Activated naive CD4-positive, alpha-beta T cell treated with anti-CD3 and anti-CD28 coated beads for 36 hours (primary cell): ENCODE measurements at regions of chr10 and their contacts with region 1.

Region 1: GRCh38 chr10:14837757-14838581 is at the starts of genes CDNF, HSPA14 and MSANTD7:
- DNase-seq: peak; percentile 99
- H3K4me3 Mint-ChIP-seq: peak within 1 kb of the TSS; percentile 92
- H3K27ac Mint-ChIP-seq: peak within 1 kb of the TSS; percentile 93
- H3K4me1 Mint-ChIP-seq: peaks cover 22% of the 10 kb centered on the region
- H3K27me3 Mint-ChIP-seq: no peaks in the 10 kb centered on the region
- total RNA-seq, gene CDNF: 1.6 to 1.8 TPM
- total RNA-seq, gene HSPA14: 28.1 to 29.9 TPM
- total RNA-seq, gene MSANTD7: 19.6 to 21.3 TPM

Region 2: DNA sequence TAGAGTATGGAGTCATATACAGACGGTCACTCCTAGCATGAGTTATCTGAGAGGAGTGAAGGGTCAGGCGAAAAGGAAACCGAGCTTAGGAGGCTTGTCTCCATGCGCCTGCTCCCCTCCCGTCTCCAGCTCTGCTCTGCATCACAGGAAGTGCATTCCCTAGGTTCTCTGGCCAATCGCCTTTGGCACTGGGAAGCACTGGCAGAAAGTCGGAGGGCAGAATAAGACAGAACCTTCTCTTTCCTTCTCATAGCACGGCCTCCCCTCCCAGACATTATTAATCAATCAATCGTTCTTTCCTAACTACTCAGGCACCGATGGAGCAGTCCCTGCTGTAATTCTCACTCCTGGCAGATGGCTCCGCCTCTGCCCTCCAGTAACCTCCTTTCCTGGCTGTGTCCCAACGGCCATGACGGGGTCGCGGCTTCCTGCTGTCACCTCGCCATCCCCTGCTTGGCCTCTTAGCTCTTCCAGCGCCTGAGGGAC is 684.4 kb before region 1 on chr10:
- CTCF ChIA-PET with region 1: no interaction called
- intact Hi-C with region 1: no loop called
- DNase-seq: no peak
- H3K4me3 Mint-ChIP-seq: no peak overlapping the region
- H3K27ac Mint-ChIP-seq: no peak overlapping the region
- H3K4me1 Mint-ChIP-seq: no peaks in the 10 kb centered on the region
- H3K27me3 Mint-ChIP-seq: peaks cover 9% of the 10 kb centered on the region

Region 3: DNA sequence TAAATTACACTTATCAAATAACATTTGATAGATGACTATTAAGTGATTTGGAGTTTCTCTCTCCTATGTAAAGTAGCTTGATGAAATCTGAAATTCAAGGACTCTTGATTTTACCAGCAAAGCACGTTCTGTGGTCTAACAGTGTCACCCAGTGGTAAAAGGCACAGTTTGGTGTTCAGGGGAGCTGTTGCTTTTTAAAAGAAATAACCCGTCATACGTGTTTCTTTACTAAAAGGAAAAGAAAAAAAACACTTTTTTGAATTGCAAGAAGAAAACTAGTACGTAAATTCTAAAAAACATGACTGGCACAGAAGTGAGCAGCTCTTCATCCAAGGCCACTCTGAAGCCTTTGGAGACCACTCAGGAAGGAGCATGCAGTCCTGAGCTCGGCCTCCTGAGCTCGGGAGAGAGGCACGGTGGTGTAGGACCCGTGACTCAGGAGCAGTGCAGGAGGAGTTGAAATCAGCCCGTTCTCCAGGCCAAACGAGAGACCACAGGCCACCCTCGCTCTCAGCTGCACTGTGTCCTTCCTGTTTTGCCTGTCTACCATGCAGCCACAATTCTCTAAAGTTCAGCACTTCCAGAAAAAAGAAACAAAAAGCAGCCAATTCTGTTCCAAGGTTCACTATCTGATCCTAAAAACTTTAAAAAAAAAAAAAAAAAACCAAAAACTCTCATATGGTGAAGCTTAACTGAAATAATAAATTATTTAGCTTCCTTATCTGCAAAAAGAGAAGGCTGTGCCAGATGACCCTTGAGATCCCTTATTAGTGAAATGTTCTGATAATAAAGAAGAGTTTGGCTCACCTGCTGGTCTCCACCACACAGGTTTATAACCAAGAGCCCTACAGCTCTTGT is 294.7 kb before region 1 on chr10:
- CTCF ChIA-PET with region 1: interaction called, 11 read pairs
- intact Hi-C with region 1: no loop called
- DNase-seq: peak; percentile 73
- H3K4me3 Mint-ChIP-seq: peak overlapping the region; percentile 30
- H3K27ac Mint-ChIP-seq: peak overlapping the region; percentile 83
- H3K4me1 Mint-ChIP-seq: peaks cover 79% of the 10 kb centered on the region
- H3K27me3 Mint-ChIP-seq: no peaks in the 10 kb centered on the region

Region 4: GRCh38 chr10:14889318-14889717 is 51.3 kb after region 1 on chr10:
- CTCF ChIA-PET with region 1: no interaction called
- intact Hi-C with region 1: no loop called
- DNase-seq: no peak
- H3K4me3 Mint-ChIP-seq: no peak overlapping the region
- H3K27ac Mint-ChIP-seq: no peak overlapping the region
- H3K4me1 Mint-ChIP-seq: peaks cover 9% of the 10 kb centered on the region
- H3K27me3 Mint-ChIP-seq: no peaks in the 10 kb centered on the region

Region 5: DNA sequence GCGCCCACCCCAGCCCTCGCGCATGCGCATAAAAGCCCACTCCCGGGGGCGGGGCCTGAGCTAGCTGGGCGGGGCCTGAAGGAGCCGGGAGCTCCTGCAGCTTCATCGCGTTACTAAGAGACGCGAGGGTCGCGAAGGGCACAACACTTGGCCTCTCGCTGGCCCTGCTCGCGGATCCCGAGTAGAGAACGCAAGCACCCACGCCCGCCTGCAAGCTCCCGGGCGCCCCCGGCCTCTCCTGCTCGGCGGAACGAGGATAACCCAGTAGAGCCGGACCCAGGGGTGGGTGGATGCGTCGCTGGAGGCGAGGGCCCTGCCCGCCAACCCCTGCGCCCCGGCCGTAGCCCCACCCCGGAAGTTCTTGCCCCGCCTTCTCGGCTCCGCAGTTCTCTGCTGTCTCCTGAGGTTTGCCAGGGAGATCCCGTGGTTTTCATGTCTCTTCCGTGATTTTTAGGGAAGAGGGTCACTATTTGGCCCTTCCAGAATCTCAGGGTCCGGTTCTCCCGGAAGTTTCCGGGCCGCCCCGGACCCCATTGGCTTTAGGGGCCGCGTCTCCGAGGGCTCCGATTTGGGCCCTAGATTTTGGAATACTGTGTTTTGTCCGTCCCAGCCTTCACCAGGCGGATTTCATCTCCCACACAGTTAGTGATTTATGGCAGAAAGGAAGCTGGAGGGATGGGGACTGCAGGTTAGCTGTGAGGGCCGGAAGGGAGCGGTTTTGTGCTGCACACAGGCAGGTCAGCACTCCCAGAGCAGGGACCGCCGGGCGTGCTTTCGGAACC is 121.5 kb after region 1 on chr10 and contains the start of gene MEIG1:
- CTCF ChIA-PET with region 1: no interaction called
- intact Hi-C with region 1: loop called (anchors 1 kb)
- DNase-seq: peak; percentile 91
- H3K4me3 Mint-ChIP-seq: peak within 1 kb of the TSS; percentile 98
- H3K27ac Mint-ChIP-seq: peak within 1 kb of the TSS; percentile 98
- H3K4me1 Mint-ChIP-seq: peaks cover 27% of the 10 kb centered on the region
- H3K27me3 Mint-ChIP-seq: no peaks in the 10 kb centered on the region
- total RNA-seq, gene MEIG1: 0.81 to 0.93 TPM

Region 6: DNA sequence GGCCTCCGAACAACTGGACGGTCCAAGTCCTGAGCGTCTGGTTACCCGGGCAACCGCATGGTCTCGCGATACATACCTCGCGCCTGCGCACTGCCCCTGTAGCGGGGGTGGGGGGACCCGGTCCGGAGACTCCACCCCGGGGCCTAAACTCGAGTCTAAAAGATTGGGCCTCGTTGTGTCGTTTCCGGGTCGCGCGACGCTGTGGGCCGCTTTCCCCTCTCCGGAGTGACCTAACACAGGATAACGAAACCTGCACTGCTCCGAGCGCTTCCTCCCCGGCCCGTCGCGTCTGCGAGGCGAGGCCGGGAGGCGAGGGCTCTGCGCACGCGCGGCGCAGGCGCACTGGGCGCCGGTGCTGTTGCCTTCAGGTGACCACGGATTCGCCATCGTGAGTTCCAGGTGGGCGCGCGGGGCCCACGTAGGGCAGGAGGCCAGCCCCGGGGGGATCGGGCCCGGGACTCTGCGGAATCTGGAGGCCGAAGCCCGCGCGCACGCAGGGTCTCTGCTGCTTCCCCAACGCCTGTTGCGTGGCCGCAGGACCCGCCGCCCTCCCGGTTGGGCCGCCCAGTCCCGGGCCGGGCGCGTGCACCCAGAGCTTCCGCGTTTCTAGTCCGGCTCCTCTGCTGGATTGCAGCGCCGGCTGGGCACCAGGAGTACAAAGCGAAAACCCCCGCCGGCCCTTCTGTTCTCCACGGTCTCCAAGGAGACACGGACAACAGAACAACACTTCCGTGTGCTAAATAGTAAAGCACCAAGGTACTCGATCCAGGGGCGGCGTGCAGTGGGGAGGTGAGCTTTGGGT is 259.2 kb after region 1 on chr10 and contains the start of gene RPP38:
- CTCF ChIA-PET with region 1: no interaction called
- intact Hi-C with region 1: loop called (anchors 1 kb)
- DNase-seq: peak; percentile 96
- H3K4me3 Mint-ChIP-seq: peak within 1 kb of the TSS; percentile 97
- H3K27ac Mint-ChIP-seq: peak within 1 kb of the TSS; percentile 94
- H3K4me1 Mint-ChIP-seq: peaks cover 36% of the 10 kb centered on the region
- H3K27me3 Mint-ChIP-seq: no peaks in the 10 kb centered on the region
- total RNA-seq, gene RPP38: 15.6 to 16.3 TPM